Activated naive CD4-positive, alpha-beta T cell treated with anti-CD3 and anti-CD28 coated beads, Interleukin-2, amount 10 ng/mL, durations not matched to agents 7 days and 5 days (primary cell): ENCODE measurements at regions of chr7 and their contacts with region 1.

Region 1: GRCh38 chr7:129218514-129219062 is 6.2 kb upstream of the AHCYL2 start:
- DNase-seq: peak; percentile 87
- H3K4me3 Mint-ChIP-seq: no peak overlapping the region
- H3K27ac Mint-ChIP-seq: no peak overlapping the region
- H3K4me1 Mint-ChIP-seq: peaks cover 14% of the 10 kb centered on the region
- H3K27me3 Mint-ChIP-seq: peaks cover 7% of the 10 kb centered on the region

Region 2: DNA sequence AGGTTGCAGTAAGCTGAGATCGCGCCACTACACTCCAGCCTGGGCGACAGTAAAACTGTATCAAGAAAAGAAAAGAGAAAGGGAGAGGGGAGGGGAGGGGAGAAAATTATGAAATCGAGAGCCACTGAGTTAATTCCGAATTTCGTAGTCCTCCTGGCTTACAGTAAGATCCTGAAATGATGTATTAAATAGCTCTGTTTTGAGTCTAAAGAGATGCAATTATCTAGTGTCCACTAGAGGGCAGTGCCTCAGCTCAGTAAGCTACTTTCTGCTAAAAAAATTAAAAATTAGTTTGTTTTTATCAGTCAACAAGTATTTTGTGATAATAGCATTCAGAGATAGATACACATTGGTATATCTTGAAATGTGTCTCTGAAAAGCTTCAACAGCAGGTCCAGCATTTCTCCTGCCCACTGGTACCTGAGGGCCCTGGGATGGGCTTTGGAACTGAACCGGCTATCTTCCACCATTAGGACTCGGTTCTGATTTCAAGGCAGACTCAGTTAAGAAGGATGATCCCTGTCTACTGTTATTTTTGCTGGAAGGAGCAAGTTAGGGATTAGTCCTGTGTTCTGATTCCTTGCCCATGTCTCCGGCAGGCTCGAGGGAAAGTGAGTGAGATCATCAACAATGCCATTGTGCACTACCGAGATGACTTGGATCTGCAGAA is 54.6 kb before region 1 on chr7:
- CTCF ChIA-PET with region 1: interaction called, 108 read pairs
- DNase-seq: no peak
- H3K4me3 Mint-ChIP-seq: no peak overlapping the region
- H3K27ac Mint-ChIP-seq: no peak overlapping the region
- H3K4me1 Mint-ChIP-seq: peaks cover 11% of the 10 kb centered on the region
- H3K27me3 Mint-ChIP-seq: peaks cover 17% of the 10 kb centered on the region

Region 3: GRCh38 chr7:129176916-129177710 is 41.5 kb before region 1 on chr7:
- CTCF ChIA-PET with region 1: no interaction called
- DNase-seq: no peak
- H3K4me3 Mint-ChIP-seq: no peak overlapping the region
- H3K27ac Mint-ChIP-seq: no peak overlapping the region
- H3K4me1 Mint-ChIP-seq: no peaks in the 10 kb centered on the region
- H3K27me3 Mint-ChIP-seq: peaks cover 43% of the 10 kb centered on the region

Region 4: DNA sequence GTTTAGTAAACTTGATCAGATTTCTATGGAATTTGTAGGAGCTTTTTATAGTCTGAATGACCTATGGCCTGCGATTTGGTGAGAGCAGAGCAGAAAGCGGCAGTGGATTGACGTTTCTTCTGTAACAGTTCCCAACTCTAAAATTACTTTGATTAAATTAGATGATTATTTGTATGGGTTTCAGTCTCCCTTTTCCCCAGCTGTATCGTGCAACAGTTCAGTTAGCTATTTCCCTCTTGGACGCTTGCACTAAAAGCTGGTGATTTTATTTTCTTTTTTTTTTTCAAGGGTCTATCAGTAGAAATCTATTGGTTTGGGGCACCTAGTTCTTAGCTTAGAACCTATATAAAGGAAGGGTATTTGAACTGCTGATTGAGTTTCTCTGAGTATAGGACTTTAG is 13.1 kb after region 1 on chr7:
- CTCF ChIA-PET with region 1: interaction called, 10 read pairs
- DNase-seq: no peak
- H3K4me3 Mint-ChIP-seq: no peak overlapping the region
- H3K27ac Mint-ChIP-seq: no peak overlapping the region
- H3K4me1 Mint-ChIP-seq: peaks cover 5% of the 10 kb centered on the region
- H3K27me3 Mint-ChIP-seq: no peaks in the 10 kb centered on the region

Region 5: GRCh38 chr7:129279762-129280161 is 61.2 kb after region 1 on chr7:
- CTCF ChIA-PET with region 1: interaction called, 185 read pairs
- DNase-seq: no peak
- H3K4me3 Mint-ChIP-seq: no peak overlapping the region
- H3K27ac Mint-ChIP-seq: no peak overlapping the region
- H3K4me1 Mint-ChIP-seq: no peaks in the 10 kb centered on the region
- H3K27me3 Mint-ChIP-seq: no peaks in the 10 kb centered on the region

Region 6: GRCh38 chr7:129285111-129285510 is 66.5 kb after region 1 on chr7:
- CTCF ChIA-PET with region 1: interaction called, 17 read pairs
- DNase-seq: no peak
- H3K4me3 Mint-ChIP-seq: no peak overlapping the region
- H3K27ac Mint-ChIP-seq: no peak overlapping the region
- H3K4me1 Mint-ChIP-seq: no peaks in the 10 kb centered on the region
- H3K27me3 Mint-ChIP-seq: no peaks in the 10 kb centered on the region

Region 7: GRCh38 chr7:129298268-129298893 is 79.8 kb after region 1 on chr7:
- CTCF ChIA-PET with region 1: interaction called, 100 read pairs
- DNase-seq: peak; percentile 73
- H3K4me3 Mint-ChIP-seq: no peak overlapping the region
- H3K27ac Mint-ChIP-seq: no peak overlapping the region
- H3K4me1 Mint-ChIP-seq: no peaks in the 10 kb centered on the region
- H3K27me3 Mint-ChIP-seq: no peaks in the 10 kb centered on the region